Transverse colon (tissue), 4 donors: ENCODE measurements at regions of chrX and their contacts with region 1.

Region 1: GRCh38 chrX:108537005-108537404 is 97.4 kb downstream of the COL4A5 start:
- DNase-seq: no peak
- H3K4me3 ChIP-seq: no peak overlapping the region
- H3K27ac ChIP-seq: no peak overlapping the region
- H3K4me1 ChIP-seq: no peaks in the 10 kb centered on the region
- H3K27me3 ChIP-seq: no peaks in the 10 kb centered on the region
- CTCF ChIP-seq: peak; percentile 45 to 72 (median 59)
- EP300 ChIP-seq: no peak
- POLR2A ChIP-seq: no peak

Region 2: GRCh38 chrX:107372492-107372891 is 1164.5 kb before region 1 on chrX:
- in situ Hi-C with region 1: no loop called
- intact Hi-C with region 1: no loop called
- DNase-seq: no peak
- H3K4me3 ChIP-seq: no peak overlapping the region
- H3K27ac ChIP-seq: no peak overlapping the region
- H3K4me1 ChIP-seq: no peaks in the 10 kb centered on the region
- H3K27me3 ChIP-seq: no peaks in the 10 kb centered on the region
- CTCF ChIP-seq: no peak
- EP300 ChIP-seq: no peak
- POLR2A ChIP-seq: no peak

Region 3: GRCh38 chrX:108224727-108225621 is 312.0 kb before region 1 on chrX:
- in situ Hi-C with region 1: loop called (anchors 10 to 25 kb)
- intact Hi-C with region 1: no loop called
- DNase-seq: no peak
- H3K4me3 ChIP-seq: no peak overlapping the region
- H3K27ac ChIP-seq: no peak overlapping the region
- H3K4me1 ChIP-seq: no peaks in the 10 kb centered on the region
- H3K27me3 ChIP-seq: no peaks in the 10 kb centered on the region
- CTCF ChIP-seq: peak in 4 of 5 experiments; percentile 25 to 46 (median 32)
- EP300 ChIP-seq: no peak
- POLR2A ChIP-seq: no peak